ENCODE measurements at regions of chr12 and their contacts with region 1.

Region 1: GRCh38 chr12:98397316-98398105 is 117.9 kb upstream of the TMPO start:
- DNase-seq: peak; percentile 72
- H3K4me3 Mint-ChIP-seq: peak overlapping the region; percentile 76
- H3K27ac Mint-ChIP-seq: peak overlapping the region; percentile 59
- H3K4me1 Mint-ChIP-seq: peaks cover 39% of the 10 kb centered on the region
- H3K27me3 Mint-ChIP-seq: peaks cover 10% of the 10 kb centered on the region

Region 2: GRCh38 chr12:96578526-96579125 is 1818.9 kb before region 1 on chr12:
- intact Hi-C with region 1: loop called (anchors 10 kb)
- DNase-seq: no peak
- H3K4me3 Mint-ChIP-seq: no peak overlapping the region
- H3K27ac Mint-ChIP-seq: no peak overlapping the region
- H3K4me1 Mint-ChIP-seq: peaks cover 2% of the 10 kb centered on the region
- H3K27me3 Mint-ChIP-seq: peaks cover 14% of the 10 kb centered on the region

Region 3: DNA sequence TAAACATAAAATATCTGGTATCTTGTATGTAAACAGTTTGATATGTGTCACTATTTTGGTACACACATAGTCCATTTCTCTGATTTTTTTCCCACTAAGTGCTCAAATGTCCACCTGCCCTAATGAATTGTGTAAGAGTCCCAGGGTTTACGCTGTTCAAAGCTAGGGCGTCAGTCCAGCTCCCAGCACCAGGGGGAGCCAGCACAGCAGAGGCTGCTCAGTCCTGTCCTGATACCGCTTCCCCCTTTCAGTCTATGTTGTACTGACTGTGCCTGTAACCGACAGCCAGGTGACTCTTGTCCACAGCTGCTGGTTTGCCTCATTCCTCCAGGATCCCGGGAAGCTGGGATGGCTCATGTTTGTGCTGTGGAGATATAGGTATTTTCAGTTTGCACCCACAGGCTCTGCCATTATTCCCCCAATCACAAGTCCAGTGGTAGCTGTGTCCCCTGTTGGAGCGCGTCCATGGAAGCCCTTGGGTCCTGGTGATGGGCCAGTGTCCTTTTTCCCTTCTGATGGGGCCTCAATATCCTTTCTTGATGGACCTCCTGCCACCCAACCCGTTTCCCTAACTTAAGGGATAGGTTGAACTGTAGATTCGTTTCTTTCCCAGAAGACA is 1248.5 kb before region 1 on chr12:
- intact Hi-C with region 1: loop called (anchors 1 kb)
- DNase-seq: peak; percentile 29
- H3K4me3 Mint-ChIP-seq: no peak overlapping the region
- H3K27ac Mint-ChIP-seq: no peak overlapping the region
- H3K4me1 Mint-ChIP-seq: peaks cover 3% of the 10 kb centered on the region
- H3K27me3 Mint-ChIP-seq: peaks cover 2% of the 10 kb centered on the region

Region 4: DNA sequence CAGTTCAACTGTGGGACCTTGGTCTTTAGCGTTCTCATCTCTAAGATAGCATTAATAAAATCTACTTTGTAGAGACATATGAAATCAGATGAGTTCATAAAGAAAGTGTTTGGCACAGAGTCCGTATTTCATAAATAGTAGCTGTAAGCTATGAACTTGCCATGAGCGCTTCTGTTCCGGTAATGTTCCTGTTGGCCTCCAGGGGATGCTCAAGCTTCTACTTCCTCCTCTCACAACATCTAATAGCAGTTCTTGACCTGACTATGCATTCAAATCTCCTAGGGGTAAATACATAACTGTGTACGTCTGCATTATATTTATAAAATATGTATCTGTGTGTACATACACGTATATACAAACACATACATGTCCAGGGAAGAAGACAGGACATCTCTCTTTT is 170.3 kb before region 1 on chr12:
- intact Hi-C with region 1: loop called (anchors 5 kb)
- DNase-seq: no peak
- H3K4me3 Mint-ChIP-seq: no peak overlapping the region
- H3K27ac Mint-ChIP-seq: no peak overlapping the region
- H3K4me1 Mint-ChIP-seq: no peaks in the 10 kb centered on the region
- H3K27me3 Mint-ChIP-seq: peaks cover 4% of the 10 kb centered on the region